ENCODE measurements at regions of chr12 and their contacts with region 1.

Region 1: DNA sequence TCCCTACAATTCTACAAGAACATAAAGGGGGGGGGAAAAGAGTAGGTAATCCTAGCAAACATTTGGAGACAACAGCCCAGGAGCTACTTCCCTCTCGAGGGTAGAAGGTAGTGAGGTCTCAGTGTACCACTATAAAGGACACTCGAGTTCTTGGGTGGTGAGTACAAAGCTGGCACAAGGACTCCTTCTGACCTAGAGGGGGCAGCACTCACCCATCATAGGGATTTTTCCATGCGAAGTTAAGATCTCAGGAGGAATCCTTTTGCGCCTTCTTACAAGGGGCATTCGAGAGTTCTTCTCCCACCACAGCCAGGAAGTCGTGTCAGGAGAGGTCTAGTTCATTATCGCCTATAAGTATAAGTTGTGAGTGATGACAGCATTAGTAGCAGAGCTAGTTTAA is 200.2 kb upstream of the RBM19 start:
- DNase-seq: peak in 1 of 3 donors; percentile 34
- ATAC-seq: peak; percentile 61 to 69
- H3K4me3 ChIP-seq: no peak overlapping the region
- H3K27ac ChIP-seq: no peak overlapping the region
- H3K4me1 ChIP-seq: no peaks in the 10 kb centered on the region
- H3K27me3 ChIP-seq: no peaks in the 10 kb centered on the region

Region 2: DNA sequence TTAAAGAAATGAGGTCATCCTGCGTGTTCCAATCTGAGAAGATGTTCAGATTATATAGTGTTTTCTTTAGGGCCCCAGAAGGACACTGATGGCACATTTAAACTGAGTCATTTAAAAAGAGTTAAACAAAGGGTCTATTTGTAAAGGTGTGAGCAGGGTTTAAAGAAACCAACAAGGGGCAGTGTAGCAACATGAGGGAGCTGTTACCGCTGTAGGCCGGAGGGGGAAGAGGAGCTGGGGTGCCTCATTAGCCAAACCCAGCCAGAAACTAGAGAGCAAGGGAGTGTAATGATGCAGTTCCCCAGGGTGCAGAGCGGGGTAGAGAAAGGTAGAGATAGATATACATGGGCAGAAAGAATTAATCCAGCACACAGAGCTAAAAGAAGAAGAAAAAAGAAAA is 79.2 kb after region 1 on chr12:
- intact Hi-C with region 1: loop called in 1 of 4 experiments (anchors 5 kb)
- DNase-seq: no peak
- ATAC-seq: peak in 1 of 2 donors; percentile 78
- H3K4me3 ChIP-seq: no peak overlapping the region
- H3K27ac ChIP-seq: no peak overlapping the region
- H3K4me1 ChIP-seq: peaks cover 3% of the 10 kb centered on the region
- H3K27me3 ChIP-seq: no peaks in the 10 kb centered on the region

Region 3: DNA sequence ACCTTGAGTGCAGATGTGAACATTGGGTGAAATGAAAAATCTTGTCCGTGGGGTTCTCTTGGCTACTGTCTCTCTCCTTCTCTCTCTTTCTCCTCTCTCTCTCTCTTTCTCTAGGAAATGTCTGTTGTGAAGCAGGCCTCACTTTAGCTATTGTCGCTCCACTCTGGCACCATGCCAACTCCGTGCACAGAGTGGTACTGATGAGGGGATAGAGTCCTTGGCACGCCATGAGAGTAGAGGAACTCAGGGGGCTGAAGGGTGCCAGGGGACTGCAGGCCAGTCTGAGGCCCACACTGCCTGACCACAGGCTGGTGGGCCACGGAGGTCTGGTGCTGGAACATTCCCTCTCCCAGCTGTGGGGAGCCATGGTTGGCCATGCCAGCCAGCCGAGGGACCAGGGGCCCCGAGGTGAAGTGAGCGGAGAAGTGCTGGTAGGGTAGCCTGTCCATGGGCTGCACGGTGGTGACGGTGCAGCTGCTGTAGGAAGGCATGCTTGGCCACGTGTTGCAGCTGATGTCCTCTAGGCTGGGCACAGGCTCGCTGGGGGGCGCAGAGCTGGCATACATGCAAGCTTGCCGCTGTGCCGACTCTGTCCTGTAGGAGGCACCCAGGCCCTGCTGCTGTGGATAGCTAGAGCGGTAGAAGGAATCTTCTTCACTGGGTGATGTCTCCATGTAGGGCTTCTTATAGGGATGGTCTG is 189.2 kb after region 1 on chr12:
- intact Hi-C with region 1: loop called in 1 of 4 experiments (anchors 10 kb)
- DNase-seq: peak in 2 of 3 donors; percentile 69 to 72
- ATAC-seq: peak; percentile 52 to 56
- H3K4me3 ChIP-seq: no peak overlapping the region
- H3K27ac ChIP-seq: no peak overlapping the region
- H3K4me1 ChIP-seq: no peaks in the 10 kb centered on the region
- H3K27me3 ChIP-seq: no peaks in the 10 kb centered on the region

Region 4: DNA sequence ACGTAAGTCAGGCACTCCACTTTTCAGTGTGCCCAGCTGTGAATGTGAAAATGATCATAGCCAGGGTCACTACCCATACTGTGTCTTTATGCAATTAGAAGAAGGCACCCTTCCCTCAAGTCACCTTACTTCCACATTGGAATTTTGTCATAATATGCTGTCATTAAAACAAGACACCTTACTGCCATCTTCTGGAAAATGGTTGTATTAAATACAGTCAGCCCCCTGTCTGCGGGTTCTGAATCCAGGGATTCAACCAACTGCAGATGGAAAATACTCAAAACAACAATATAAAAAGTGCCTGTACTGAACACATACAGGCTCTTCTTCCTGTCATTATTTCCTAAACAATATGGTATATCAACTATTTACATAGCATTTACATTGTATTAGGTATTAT is 309.8 kb after region 1 on chr12:
- intact Hi-C with region 1: loop called in 1 of 4 experiments (anchors 10 kb)
- DNase-seq: no peak
- ATAC-seq: peak; percentile 34 to 54
- H3K4me3 ChIP-seq: no peak overlapping the region
- H3K27ac ChIP-seq: no peak overlapping the region
- H3K4me1 ChIP-seq: peaks cover 3% of the 10 kb centered on the region
- H3K27me3 ChIP-seq: no peaks in the 10 kb centered on the region

Region 5: GRCh38 chr12:114508529-114509129 is 342.3 kb after region 1 on chr12:
- intact Hi-C with region 1: loop called in 3 of 4 experiments (anchors 5 to 10 kb)
- DNase-seq: peak; percentile 66 to 88 (median 67)
- ATAC-seq: peak; percentile 78 to 84
- H3K4me3 ChIP-seq: no peak overlapping the region
- H3K27ac ChIP-seq: no peak overlapping the region
- H3K4me1 ChIP-seq: no peaks in the 10 kb centered on the region
- H3K27me3 ChIP-seq: no peaks in the 10 kb centered on the region

Measured in right cardiac atrium (tissue), 5 donors.